OCI-LY7 (cell line): ENCODE measurements at regions of chr18 and their contacts with region 1.

Region 1: GRCh38 chr18:51383116-51383515 is 185.6 kb upstream of the MEX3C start:
- DNase-seq: no peak
- H3K4me3 ChIP-seq: no peak overlapping the region
- H3K27ac ChIP-seq: no peak overlapping the region
- H3K4me1 ChIP-seq: no peaks in the 10 kb centered on the region
- CTCF ChIP-seq: no peak

Region 2: DNA sequence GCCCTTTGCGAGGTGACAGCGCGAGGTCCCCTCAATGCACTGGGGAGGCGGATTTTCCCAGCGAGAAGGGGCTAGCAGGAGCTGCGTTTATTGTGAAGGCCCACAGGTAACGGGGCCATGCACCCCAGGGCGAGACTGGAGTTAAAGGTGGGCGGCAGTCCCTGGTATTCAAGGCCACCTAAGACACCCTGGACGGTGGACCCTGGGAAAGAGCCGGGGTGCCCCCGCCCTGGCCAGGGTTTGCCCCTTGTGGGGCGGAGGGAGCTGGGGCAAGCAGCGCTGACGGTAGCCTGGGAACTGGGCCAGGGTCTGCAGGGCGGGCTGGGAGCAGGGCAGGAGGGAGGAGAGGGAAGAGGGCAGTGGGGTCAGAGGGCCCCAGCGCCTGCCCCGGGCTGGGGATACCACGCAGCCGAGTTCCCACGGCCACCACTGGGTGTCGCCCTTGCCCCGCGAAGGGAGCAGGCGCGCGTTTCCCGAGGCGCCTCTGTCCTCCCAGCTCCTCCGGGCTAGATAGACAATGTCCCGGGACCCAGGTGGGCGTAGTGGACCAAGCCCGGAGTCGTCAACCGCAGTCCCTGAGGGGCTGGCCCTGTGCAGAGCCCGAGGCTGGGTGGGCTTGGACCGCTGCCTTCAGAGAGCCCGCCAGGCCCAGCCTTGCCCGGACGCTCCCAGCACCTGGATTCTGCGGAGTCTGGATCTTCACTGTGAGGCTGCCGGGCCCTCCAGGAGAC is 272.9 kb before region 1 on chr18:
- CTCF ChIA-PET with region 1: no interaction called
- POLR2A ChIA-PET with region 1: no interaction called
- intact Hi-C with region 1: loop called (anchors 5 kb)
- DNase-seq: peak; percentile 49
- H3K4me3 ChIP-seq: no peak overlapping the region
- H3K27ac ChIP-seq: no peak overlapping the region
- H3K4me1 ChIP-seq: peaks cover 9% of the 10 kb centered on the region
- CTCF ChIP-seq: peak; percentile 69

Region 3: DNA sequence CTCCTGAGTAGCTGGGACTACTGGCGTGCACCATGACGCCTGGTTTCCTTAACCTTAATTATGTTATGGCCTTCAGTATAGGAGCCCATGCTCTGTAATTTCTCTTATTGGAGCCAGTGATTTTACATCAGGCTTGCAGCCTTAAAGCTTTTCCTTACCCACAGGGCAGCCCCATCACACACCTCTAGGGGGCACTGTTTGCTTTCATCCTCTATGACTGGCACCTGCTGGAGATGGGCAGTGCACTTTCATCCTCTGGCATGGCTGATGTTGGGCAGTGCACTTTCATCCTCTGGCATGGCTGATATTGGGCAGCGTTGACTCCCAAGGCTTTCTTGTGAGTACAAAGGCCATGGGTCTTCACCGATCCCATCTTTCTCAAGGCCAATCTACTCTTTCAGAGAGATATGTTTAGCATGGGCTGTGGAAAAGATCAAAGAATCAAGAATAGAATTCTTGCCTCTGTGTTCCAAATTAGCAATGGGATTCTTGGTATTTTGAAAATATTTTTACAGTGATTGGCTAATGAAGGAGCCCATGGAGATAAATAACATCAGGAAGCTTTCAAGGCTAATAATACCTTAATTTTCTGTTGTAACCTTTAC is 105.0 kb before region 1 on chr18:
- CTCF ChIA-PET with region 1: no interaction called
- POLR2A ChIA-PET with region 1: no interaction called
- intact Hi-C with region 1: loop called (anchors 5 kb)
- DNase-seq: peak; percentile 32
- H3K4me3 ChIP-seq: no peak overlapping the region
- H3K27ac ChIP-seq: no peak overlapping the region
- H3K4me1 ChIP-seq: no peaks in the 10 kb centered on the region
- CTCF ChIP-seq: peak; percentile 73

Region 4: DNA sequence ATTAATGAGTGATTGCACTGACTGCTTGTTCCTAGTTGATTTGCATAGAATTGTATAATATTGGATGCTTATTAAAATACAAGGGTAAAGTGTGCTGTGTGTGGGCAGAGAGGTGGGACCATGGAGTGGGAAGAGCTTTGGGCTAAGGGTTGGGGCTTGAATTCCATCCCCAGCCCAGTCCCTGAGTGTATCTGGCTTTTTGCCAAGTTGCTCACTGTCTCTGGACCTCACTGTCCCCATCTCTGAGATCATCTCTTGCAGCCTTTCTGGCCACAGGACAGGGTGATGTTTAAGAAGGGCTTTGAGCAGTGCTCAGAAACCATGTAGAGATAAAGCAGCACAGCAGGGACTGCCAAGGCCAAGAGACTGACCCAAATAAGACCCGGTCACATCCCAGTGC is 58.2 kb before region 1 on chr18:
- CTCF ChIA-PET with region 1: no interaction called
- POLR2A ChIA-PET with region 1: no interaction called
- intact Hi-C with region 1: no loop called
- DNase-seq: no peak
- H3K4me3 ChIP-seq: no peak overlapping the region
- H3K27ac ChIP-seq: no peak overlapping the region
- H3K4me1 ChIP-seq: no peaks in the 10 kb centered on the region
- CTCF ChIP-seq: no peak